ENCODE measurements at regions of chr13 and their contacts with region 1.

Region 1: DNA sequence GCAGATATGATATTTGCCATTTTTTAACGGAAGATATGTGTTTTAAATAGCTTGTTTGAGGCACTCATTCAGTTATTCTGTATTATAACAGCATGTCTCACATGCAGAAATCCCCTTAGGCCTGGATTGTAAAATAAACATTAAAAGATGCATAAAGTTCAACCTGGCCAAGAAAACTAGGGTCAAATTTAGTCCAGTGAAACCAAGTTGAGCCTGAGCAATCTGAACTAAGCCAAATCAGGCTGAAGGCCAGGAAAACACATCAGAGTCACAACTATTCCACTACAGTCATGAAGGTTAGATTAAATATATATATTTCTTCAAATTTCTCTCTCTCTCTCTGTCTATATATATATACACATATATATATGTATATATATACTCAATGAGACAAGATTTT is 504.8 kb downstream of the SLITRK1 start:
- DNase-seq: no peak
- H3K4me3 ChIP-seq: no peak overlapping the region
- H3K27ac ChIP-seq: no peak overlapping the region
- H3K4me1 ChIP-seq: no peaks in the 10 kb centered on the region
- H3K27me3 ChIP-seq: no peaks in the 10 kb centered on the region
- CTCF ChIP-seq: no peak
- POLR2A ChIP-seq: no peak

Region 2: DNA sequence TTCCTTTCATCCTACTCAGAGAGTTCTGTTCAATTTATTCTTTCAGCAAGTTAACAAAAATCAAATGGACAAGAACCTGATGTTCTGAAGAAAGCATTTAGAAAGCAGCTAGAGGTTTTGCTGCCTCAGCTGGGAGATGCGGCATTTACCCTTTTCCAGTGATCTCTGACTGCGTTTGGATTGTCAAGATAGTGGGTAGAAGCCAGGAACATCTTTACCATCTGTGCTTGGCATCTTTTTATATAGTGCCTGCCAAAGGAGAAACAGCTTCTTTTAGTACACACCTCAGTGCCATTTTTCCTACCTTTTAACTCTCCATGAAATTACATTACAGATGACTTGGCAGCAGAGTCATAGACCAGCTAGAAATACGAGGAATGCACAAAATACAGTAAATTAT is 176.0 kb before region 1 on chr13:
- intact Hi-C with region 1: no loop called
- DNase-seq: no peak
- H3K4me3 ChIP-seq: no peak overlapping the region
- H3K27ac ChIP-seq: no peak overlapping the region
- H3K4me1 ChIP-seq: no peaks in the 10 kb centered on the region
- H3K27me3 ChIP-seq: no peaks in the 10 kb centered on the region
- CTCF ChIP-seq: no peak
- POLR2A ChIP-seq: no peak

Region 3: DNA sequence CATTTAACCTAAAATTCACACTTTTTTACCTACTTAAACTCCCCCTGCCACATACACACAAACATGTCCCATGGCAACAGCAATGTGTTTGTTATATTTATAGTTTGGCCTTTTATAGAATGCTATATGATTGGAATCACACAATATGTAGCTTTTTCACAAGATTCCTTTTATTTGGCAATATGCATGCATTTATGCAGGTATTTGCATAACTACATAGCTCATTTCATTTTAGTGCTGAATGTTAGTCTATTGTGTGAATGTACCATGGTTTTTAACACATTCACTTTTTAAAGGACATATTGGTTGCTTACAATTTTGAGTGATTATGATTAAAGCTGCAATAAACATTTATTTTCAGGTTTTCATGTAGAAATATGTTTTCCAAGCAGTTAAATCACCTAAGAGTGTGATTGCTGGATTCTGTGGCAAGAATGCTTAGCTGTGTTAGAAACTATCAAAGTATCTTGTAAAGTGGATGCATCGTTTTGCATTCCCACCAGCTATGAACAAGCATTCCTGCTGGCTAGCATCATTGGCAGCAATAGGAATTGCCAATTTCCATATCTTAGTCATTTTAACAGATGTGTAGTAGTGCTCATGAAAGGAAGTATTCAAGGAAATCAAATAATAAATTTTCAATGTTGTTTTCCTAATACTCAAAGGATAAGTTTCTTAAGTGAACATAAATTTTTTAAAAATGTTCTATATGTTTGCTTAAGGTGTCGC is 52.2 kb before region 1 on chr13:
- intact Hi-C with region 1: loop called (anchors 5 kb)
- DNase-seq: no peak
- H3K4me3 ChIP-seq: no peak overlapping the region
- H3K27ac ChIP-seq: no peak overlapping the region
- H3K4me1 ChIP-seq: no peaks in the 10 kb centered on the region
- H3K27me3 ChIP-seq: no peaks in the 10 kb centered on the region
- CTCF ChIP-seq: no peak
- POLR2A ChIP-seq: no peak

Region 4: DNA sequence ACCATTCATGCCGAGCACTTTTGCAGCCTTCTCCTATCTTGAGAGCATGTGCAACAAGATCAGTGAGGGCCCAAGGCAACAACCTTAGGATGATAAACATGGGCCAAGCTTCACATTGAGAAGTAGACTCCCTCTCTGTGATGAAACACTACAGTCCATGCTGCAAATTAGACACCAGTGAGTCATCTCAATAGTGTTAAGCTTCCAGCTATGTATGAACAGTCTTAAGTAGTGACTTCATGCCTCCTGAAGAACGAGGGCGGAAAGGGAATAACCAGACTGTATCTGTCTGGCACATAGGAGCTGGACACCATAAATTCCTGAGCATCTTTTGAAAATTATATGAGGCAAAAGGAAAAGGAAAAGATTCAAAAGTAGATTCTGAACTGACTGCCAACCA is 814.6 kb after region 1 on chr13:
- intact Hi-C with region 1: no loop called
- DNase-seq: no peak
- H3K4me3 ChIP-seq: no peak overlapping the region
- H3K27ac ChIP-seq: no peak overlapping the region
- H3K4me1 ChIP-seq: no peaks in the 10 kb centered on the region
- H3K27me3 ChIP-seq: no peaks in the 10 kb centered on the region
- CTCF ChIP-seq: no peak
- POLR2A ChIP-seq: no peak